T-cell (primary cell): ENCODE measurements at regions of chr21 and their contacts with region 1.

Region 1: DNA sequence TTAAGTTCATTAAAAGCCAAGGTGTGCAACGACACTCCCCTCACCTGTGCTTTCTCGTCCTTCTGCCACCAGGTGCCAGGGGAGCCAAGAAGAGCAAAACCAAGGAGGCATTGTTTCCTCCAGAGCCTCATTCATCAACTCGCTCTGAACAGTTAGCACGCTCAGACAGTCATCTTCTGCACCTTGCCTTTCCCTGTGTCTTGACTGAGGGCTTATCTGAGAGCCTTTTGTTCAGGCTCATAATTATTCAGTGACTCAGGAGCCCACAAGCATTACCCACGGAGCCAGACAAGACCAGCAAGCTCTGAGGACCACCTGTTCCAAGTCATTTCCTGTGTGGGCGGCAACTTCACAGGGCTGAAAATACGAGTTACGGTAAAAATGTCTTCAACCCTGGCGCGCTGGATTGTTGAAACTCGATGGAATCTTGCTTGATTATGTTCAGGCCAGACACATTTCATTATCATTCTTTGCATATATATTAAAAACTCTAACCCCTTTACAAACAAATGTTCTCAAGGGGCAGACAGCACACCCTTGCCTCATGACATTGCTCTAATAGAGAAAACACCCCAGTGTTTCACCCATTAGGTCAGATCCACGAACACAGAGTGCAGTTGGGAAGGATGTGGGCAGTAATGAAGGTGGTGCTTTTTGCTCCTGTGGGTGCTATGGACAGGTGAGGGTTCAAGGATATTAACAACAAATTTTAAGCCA is 89.7 kb upstream of the RUNX1 start:
- DNase-seq: peak in 32 of 35 experiments; percentile 6 to 55 (median 27)
- ATAC-seq: peak; percentile 79 to 92 (median 87)
- H3K4me3 ChIP-seq: peak overlapping the region in 1 of 2 donors; percentile 17
- H3K4me3 Mint-ChIP-seq: peak overlapping the region; percentile 40 to 62 (median 47)
- H3K27ac ChIP-seq: no peak overlapping the region
- H3K27ac Mint-ChIP-seq: peak overlapping the region in 1 of 2 donors; percentile 12
- H3K4me1 ChIP-seq: peaks cover 7 to 8% of the 10 kb centered on the region in 2 experiments
- H3K4me1 Mint-ChIP-seq: peaks cover 16 to 18% (median 17%) of the 10 kb centered on the region in 3 donors
- H3K27me3 ChIP-seq: no peaks in the 10 kb centered on the region
- H3K27me3 Mint-ChIP-seq: no peaks in the 10 kb centered on the region

Region 2: GRCh38 chr21:35696644-35697043 is 557.8 kb after region 1 on chr21:
- CTCF ChIA-PET with region 1: interaction called in 1 of 2 experiments, 12 read pairs
- POLR2A ChIA-PET with region 1: no interaction called
- DNase-seq: no peak
- ATAC-seq: no peak
- H3K4me3 ChIP-seq: no peak overlapping the region
- H3K4me3 Mint-ChIP-seq: no peak overlapping the region
- H3K27ac ChIP-seq: no peak overlapping the region
- H3K27ac Mint-ChIP-seq: no peak overlapping the region
- H3K4me1 ChIP-seq: no peaks in the 10 kb centered on the region
- H3K4me1 Mint-ChIP-seq: peaks cover 8 to 12% (median 9%) of the 10 kb centered on the region in 3 donors
- H3K27me3 ChIP-seq: peaks cover 0 to 11% of the 10 kb centered on the region in 2 experiments
- H3K27me3 Mint-ChIP-seq: peaks cover 15 to 22% of the 10 kb centered on the region in 2 donors